ENCODE measurements at regions of chr14 and their contacts with region 1.

Region 1: DNA sequence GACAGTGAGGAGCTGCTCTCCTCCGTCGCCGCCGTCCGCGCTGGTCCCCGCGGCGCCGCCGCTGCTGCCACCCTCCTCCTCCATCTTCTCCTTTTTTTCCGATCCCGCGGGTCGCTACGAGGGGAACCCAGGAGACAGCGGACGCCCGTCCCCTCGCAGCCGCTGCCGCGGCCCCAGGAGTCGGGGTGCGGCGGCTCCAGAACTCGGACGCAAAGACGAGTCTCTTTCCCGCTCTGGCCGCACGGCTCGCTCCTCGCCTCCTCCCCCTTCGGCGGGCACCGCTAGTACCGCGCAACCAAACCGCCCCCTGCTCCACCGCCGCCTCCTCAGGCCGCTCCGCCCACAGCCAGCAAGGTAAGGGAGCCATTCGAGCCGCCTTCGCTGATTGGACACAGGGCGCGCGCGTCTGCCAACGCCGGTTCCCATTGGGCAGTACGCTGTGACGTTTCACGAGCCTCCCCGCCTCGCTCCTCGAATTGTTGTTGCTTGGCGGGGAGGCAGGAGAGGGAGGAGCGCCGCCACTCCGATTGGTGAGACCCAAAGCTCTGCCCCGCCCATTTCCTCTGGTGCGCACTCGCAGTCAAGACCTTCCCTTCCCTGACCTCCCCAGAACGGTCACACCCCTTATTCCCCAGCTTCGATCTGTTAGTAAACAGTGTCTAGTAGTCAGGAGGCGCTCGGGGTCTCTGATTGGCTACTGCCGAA is at the start of gene RPS6KA5:
- DNase-seq: peak; percentile 100
- ATAC-seq: peak; percentile 98
- H3K4me3 ChIP-seq: peak within 1 kb of the TSS; percentile 83
- H3K27ac ChIP-seq: peak within 1 kb of the TSS; percentile 91
- H3K4me1 ChIP-seq: no peaks in the 10 kb centered on the region
- H3K27me3 ChIP-seq: no peaks in the 10 kb centered on the region
- total RNA-seq, gene RPS6KA5: 9.9 to 15.5 (median 13.2) TPM

Region 2: DNA sequence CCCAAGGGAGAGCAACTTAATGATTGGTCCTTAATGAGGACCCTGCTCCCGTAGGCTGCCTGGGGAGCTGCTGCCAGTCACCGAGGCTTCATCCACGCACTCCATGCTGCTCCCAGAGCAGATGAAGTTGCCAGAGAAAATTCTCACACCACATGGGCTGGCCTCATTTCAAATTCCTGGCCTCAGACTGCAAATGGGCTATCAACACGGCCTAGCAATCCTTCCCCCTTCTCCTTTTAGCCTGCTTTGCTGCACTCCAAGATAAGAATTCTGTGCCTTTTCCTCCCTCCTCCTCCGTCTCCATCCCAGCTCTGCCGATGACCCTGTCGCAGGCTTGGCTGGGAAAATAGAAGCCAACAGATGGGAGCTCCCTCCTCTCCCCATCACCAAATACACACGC is 42.6 kb after region 1 on chr14:
- intact Hi-C with region 1: loop called in 1 of 4 experiments (anchors 5 kb)
- DNase-seq: peak; percentile 39 to 73 (median 72)
- ATAC-seq: peak; percentile 64 to 86
- H3K4me3 ChIP-seq: no peak overlapping the region
- H3K27ac ChIP-seq: no peak overlapping the region
- H3K4me1 ChIP-seq: no peaks in the 10 kb centered on the region
- H3K27me3 ChIP-seq: no peaks in the 10 kb centered on the region

Region 3: DNA sequence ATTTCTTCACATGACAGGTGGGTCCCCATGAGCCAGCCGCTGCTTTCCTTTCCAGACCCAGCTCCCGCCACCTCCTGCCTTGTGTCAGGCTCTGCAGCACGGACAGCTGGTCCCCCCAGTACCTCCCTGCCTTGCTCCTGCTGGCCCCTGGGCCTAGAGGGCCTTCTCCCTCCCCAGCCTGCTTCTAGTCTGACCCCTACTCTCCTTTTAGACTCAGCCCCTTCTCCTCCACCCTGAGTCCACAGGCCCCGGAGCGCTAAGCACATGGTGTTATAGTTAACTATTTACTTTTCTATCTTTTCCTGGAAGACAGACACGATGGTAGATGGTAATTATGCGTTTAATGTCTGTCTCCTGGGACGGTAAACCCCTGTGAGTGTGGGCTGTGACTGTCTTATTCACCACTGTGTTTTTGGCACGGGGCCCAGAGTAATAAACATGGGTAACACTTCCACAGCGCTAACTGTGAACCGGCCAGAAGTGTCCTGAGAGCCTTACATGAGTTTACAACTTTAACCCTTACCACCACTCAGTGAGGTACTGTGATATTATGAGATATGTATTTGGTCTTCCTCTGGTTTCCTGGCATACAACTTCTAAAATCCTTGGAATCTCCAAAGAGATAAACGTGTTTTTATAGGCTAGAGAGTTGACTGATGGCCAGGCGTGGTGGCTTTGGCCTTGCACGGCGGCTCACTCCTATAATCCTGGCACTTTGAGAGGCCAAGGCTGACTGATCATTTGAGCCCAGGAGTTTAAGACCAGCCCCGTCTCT is 94.5 kb after region 1 on chr14:
- intact Hi-C with region 1: loop called in 2 of 4 experiments (anchors 10 kb)
- DNase-seq: peak in 2 of 3 donors; percentile 62 to 78
- ATAC-seq: peak; percentile 76 to 82
- H3K4me3 ChIP-seq: no peak overlapping the region
- H3K27ac ChIP-seq: peak overlapping the region; percentile 65
- H3K4me1 ChIP-seq: peaks cover 6% of the 10 kb centered on the region
- H3K27me3 ChIP-seq: no peaks in the 10 kb centered on the region

Region 4: DNA sequence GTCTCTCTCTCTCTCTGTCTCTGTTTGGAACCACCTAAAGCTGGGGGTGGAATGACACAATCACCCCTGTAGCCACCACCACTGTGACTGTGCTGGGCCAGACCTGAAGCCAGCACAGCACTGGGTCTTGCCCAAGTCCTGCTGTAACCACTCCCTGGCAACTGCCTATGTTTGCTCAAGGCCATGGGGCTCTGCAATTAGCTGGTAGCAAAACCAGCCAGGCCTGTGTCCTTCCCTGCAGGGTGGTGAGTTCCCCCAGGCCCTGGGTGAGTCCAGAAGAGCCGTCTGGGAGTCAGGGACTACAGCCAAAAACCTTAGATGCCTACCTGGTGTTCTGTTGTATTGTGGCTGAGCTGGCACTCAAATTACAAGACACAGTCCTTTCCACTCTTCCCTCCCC is 104.2 kb after region 1 on chr14:
- intact Hi-C with region 1: loop called in 2 of 4 experiments (anchors 10 kb)
- DNase-seq: peak in 1 of 3 donors; percentile 37
- ATAC-seq: peak in 1 of 2 donors; percentile 30
- H3K4me3 ChIP-seq: no peak overlapping the region
- H3K27ac ChIP-seq: peak overlapping the region; percentile 43
- H3K4me1 ChIP-seq: no peaks in the 10 kb centered on the region
- H3K27me3 ChIP-seq: no peaks in the 10 kb centered on the region

Region 5: GRCh38 chr14:91177073-91178034 is 116.9 kb after region 1 on chr14:
- intact Hi-C with region 1: loop called in 1 of 4 experiments (anchors 5 kb)
- DNase-seq: peak in 1 of 3 donors; percentile 55
- ATAC-seq: peak; percentile 46 to 62
- H3K4me3 ChIP-seq: no peak overlapping the region
- H3K27ac ChIP-seq: no peak overlapping the region
- H3K4me1 ChIP-seq: no peaks in the 10 kb centered on the region
- H3K27me3 ChIP-seq: no peaks in the 10 kb centered on the region